ENCODE measurements at regions of chr5 and their contacts with region 1.

Region 1: DNA sequence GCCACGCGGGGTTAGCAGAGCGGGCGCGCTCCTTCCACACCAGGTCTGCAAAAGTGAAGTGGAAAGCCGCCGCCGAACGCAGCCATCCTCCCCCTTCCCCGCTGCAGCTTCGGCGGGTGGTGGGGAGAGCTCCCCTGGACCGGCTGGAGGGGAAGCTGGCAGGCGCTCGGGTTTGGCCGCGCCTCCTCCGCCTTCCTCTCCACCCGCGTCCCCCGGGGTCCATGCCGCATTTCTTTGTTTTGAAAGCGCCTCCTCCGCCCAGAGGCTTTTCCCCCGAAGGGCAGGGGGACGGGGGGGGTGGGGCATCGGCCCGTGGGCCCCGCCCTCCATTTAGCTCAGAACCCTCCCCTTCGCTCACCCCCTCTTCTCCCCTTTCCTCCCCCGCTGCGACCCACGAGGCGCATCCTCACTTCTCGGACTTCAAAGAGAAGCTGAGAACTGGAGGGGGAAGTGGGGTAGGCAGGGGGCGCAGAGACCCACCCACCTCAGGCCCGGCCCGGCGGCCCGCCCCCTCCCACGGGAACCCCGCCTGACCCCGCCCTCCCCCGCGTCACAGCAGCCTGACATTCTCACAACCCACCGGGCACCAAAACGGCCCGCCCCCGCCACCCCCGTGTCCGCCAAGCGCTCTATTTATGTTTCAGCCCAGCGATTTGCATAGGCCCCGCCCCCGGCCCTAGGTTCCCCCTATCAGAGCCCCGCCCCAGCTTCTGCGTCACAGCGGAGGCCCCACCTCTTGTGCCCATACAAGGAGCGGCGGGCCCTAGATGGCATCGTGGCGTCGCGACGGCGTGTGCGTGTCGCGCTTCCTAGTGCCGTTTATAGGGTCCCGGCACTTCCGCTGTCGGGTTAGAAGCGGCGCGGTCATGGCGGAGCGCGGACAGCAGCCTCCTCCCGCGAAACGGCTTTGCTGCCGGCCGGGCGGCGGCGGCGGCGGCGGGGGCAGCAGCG is at the start of gene ZSWIM6:
- DNase-seq: peak; percentile 96 to 99 (median 97)
- ATAC-seq: peak; percentile 90
- H3K4me3 ChIP-seq: peak within 1 kb of the TSS; percentile 86
- H3K4me3 Mint-ChIP-seq: peak within 1 kb of the TSS; percentile 87 to 98 (median 94)
- H3K27ac ChIP-seq: peak within 1 kb of the TSS; percentile 91
- H3K27ac Mint-ChIP-seq: peak within 1 kb of the TSS; percentile 81 to 98 (median 95)
- H3K4me1 ChIP-seq: peaks cover 15 to 29% of the 10 kb centered on the region in 2 donors
- H3K4me1 Mint-ChIP-seq: peaks cover 22 to 44% (median 31%) of the 10 kb centered on the region in 7 donors
- H3K27me3 ChIP-seq: no peaks in the 10 kb centered on the region
- H3K27me3 Mint-ChIP-seq: peaks cover 7 to 52% (median 19%) of the 10 kb centered on the region in 5 donors
- total RNA-seq, gene ZSWIM6: 4.2 to 18.5 (median 11.5) TPM

Region 2: DNA sequence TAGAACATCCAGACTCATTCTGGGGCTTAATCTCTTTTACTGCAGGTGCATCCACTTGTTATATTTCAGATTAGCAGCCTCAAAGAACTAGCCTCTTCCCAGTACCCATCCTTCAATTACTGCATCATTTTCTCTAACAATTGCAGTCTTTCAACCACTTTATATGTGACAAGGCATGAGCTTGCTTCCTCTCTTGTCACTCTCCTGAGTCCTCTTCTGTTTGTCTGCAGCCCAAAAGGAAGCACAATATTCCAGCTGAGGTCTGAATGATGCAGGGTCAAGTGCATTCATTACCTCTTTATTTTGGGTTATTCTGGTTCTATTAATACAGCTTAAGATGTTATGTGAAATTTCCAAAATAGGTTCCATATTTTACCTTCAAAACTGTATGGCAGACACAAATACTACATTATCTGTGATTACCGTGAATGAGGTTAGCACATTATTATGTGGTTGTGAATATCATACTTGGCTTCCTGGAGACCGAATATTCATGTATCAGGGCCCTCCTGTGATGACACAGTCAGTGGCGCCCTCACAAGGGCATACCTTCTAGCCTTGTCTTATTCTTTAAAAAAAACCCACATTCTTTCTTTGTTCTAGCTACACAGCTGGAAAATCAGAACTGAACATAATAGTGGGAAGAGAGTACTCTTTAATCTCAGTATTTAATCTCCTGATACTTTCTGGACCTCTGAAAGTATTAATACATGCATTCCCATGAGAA is 1761.9 kb before region 1 on chr5:
- CTCF ChIA-PET with region 1: no interaction called
- POLR2A ChIA-PET with region 1: no interaction called
- intact Hi-C with region 1: no loop called
- DNase-seq: no peak
- ATAC-seq: no peak
- H3K4me3 ChIP-seq: no peak overlapping the region
- H3K4me3 Mint-ChIP-seq: no peak overlapping the region
- H3K27ac ChIP-seq: no peak overlapping the region
- H3K27ac Mint-ChIP-seq: no peak overlapping the region
- H3K4me1 ChIP-seq: no peaks in the 10 kb centered on the region
- H3K4me1 Mint-ChIP-seq: peaks cover 0 to 3% (median 0%) of the 10 kb centered on the region in 7 donors
- H3K27me3 ChIP-seq: no peaks in the 10 kb centered on the region
- H3K27me3 Mint-ChIP-seq: peaks cover 0 to 16% (median 0%) of the 10 kb centered on the region in 5 donors

Region 3: GRCh38 chr5:60944904-60945812 is 386.5 kb before region 1 on chr5 and contains the starts of genes ERCC8 and NDUFAF2:
- CTCF ChIA-PET with region 1: no interaction called
- POLR2A ChIA-PET with region 1: interaction called, 9 read pairs
- intact Hi-C with region 1: loop called (anchors 1 kb)
- DNase-seq: peak; percentile 72 to 90 (median 87)
- ATAC-seq: peak; percentile 99
- H3K4me3 ChIP-seq: peak within 1 kb of the TSS; percentile 86
- H3K4me3 Mint-ChIP-seq: no peak within 1 kb of the TSS
- H3K27ac ChIP-seq: peak within 1 kb of the TSS; percentile 69
- H3K27ac Mint-ChIP-seq: peak within 1 kb of the TSS in 2 of 9 donors; percentile 87 to 91
- H3K4me1 ChIP-seq: peaks cover 0 to 6% of the 10 kb centered on the region in 2 donors
- H3K4me1 Mint-ChIP-seq: peaks cover 16 to 40% (median 23%) of the 10 kb centered on the region in 7 donors
- H3K27me3 ChIP-seq: no peaks in the 10 kb centered on the region
- H3K27me3 Mint-ChIP-seq: no peaks in the 10 kb centered on the region
- total RNA-seq, gene ERCC8: 4.9 to 9.0 (median 8.0) TPM
- total RNA-seq, gene NDUFAF2: 7.0 to 19.4 (median 11.3) TPM

Region 4: GRCh38 chr5:61280205-61280604 is 51.5 kb before region 1 on chr5:
- CTCF ChIA-PET with region 1: no interaction called
- POLR2A ChIA-PET with region 1: interaction called, 5 read pairs
- intact Hi-C with region 1: loop called (anchors 2 kb)
- DNase-seq: peak in 4 of 9 donors; percentile 19 to 28 (median 25)
- ATAC-seq: no peak
- H3K4me3 ChIP-seq: no peak overlapping the region
- H3K4me3 Mint-ChIP-seq: no peak overlapping the region
- H3K27ac ChIP-seq: no peak overlapping the region
- H3K27ac Mint-ChIP-seq: peak overlapping the region in 1 of 9 donors; percentile 2
- H3K4me1 ChIP-seq: peaks cover 0 to 5% of the 10 kb centered on the region in 2 donors
- H3K4me1 Mint-ChIP-seq: peaks cover 16 to 37% (median 21%) of the 10 kb centered on the region in 7 donors
- H3K27me3 ChIP-seq: no peaks in the 10 kb centered on the region
- H3K27me3 Mint-ChIP-seq: no peaks in the 10 kb centered on the region

Region 5: GRCh38 chr5:61319388-61320146 is 12.1 kb before region 1 on chr5:
- CTCF ChIA-PET with region 1: interaction called, 3 read pairs
- POLR2A ChIA-PET with region 1: interaction called, 9 read pairs
- intact Hi-C with region 1: loop called in 1 of 2 experiments (anchors 1 kb)
- DNase-seq: peak in 5 of 9 donors; percentile 28 to 42 (median 37)
- ATAC-seq: peak; percentile 73
- H3K4me3 ChIP-seq: peak overlapping the region; percentile 24
- H3K4me3 Mint-ChIP-seq: peak overlapping the region in 9 of 10 donors; percentile 53 to 85 (median 76)
- H3K27ac ChIP-seq: no peak overlapping the region
- H3K27ac Mint-ChIP-seq: peak overlapping the region in 6 of 9 donors; percentile 8 to 76 (median 64)
- H3K4me1 ChIP-seq: peaks cover 0 to 10% of the 10 kb centered on the region in 2 donors
- H3K4me1 Mint-ChIP-seq: peaks cover 8 to 14% (median 11%) of the 10 kb centered on the region in 7 donors
- H3K27me3 ChIP-seq: no peaks in the 10 kb centered on the region
- H3K27me3 Mint-ChIP-seq: peaks cover 0 to 23% (median 12%) of the 10 kb centered on the region in 5 donors

Region 6: GRCh38 chr5:61658592-61659008 is 326.9 kb after region 1 on chr5:
- CTCF ChIA-PET with region 1: no interaction called
- POLR2A ChIA-PET with region 1: interaction called, 4 read pairs
- intact Hi-C with region 1: loop called in 1 of 2 experiments (anchors 2 kb)
- DNase-seq: peak; percentile 40 to 83 (median 66)
- ATAC-seq: peak; percentile 85
- H3K4me3 ChIP-seq: no peak overlapping the region
- H3K4me3 Mint-ChIP-seq: no peak overlapping the region
- H3K27ac ChIP-seq: no peak overlapping the region
- H3K27ac Mint-ChIP-seq: peak overlapping the region in 1 of 9 donors; percentile 6
- H3K4me1 ChIP-seq: no peaks in the 10 kb centered on the region
- H3K4me1 Mint-ChIP-seq: peaks cover 0 to 4% (median 0%) of the 10 kb centered on the region in 7 donors
- H3K27me3 ChIP-seq: no peaks in the 10 kb centered on the region
- H3K27me3 Mint-ChIP-seq: peaks cover 5 to 17% (median 12%) of the 10 kb centered on the region in 5 donors